HepG2 (cell line): ENCODE measurements at regions of chr11 and their contacts with region 1.

Region 1: GRCh38 chr11:100776212-100776896 is 89.3 kb downstream of the ARHGAP42 start:
- DNase-seq: peak; percentile 74
- ATAC-seq: peak; percentile 78
- H3K4me3 ChIP-seq: no peak overlapping the region; a peak in 1 of 6 replicates
- H3K27ac ChIP-seq: peak overlapping the region; percentile 52
- H3K4me1 ChIP-seq: peaks cover 40% of the 10 kb centered on the region
- H3K27me3 ChIP-seq: no peaks in the 10 kb centered on the region
- CTCF ChIP-seq: no peak
- EP300 ChIP-seq: peak in 1 of 2 experiments; percentile 50; a peak in 1 of 4 replicates
- POLR2A ChIP-seq: no peak
- RAD21 ChIP-seq: no peak

Region 2: DNA sequence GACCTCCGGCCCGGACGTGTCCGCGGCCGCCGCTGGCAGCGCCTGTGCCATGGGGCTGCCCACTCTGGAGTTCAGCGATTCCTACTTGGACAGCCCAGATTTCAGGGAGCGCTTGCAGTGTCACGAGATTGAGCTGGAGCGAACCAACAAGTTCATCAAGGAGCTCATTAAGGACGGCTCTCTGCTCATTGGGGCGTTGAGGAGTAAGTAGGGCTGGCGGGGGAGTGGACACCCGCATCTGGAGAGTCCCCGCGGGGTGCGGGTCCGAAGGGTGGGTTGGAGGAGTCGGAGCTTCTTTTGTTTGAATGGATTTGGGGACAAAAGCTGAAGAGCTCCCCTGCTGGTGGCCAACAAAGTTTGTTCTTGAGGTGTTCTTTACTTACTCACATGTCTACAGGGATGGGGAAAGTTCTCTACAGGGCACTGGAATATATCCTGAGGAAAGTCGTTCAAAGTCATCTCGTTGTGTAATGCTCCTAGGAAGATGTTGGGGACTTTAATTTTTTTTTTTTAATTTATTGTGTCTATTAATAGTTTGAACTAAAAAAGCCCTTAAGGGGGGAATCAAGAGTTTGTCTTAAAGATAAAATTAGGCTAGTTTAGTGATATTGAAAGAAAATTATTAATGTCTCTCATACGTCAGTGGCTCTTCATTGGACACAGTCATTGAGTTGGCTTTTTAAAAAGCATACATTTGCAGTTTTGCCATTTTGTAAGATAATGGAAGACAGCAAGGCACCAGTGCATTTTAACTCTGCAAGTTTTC is 88.5 kb before region 1 on chr11:
- CTCF ChIA-PET with region 1: no interaction called
- POLR2A ChIA-PET with region 1: interaction called, 3 read pairs
- in situ Hi-C with region 1: no loop called
- intact Hi-C with region 1: loop called (anchors 10 kb)
- DNase-seq: peak; percentile 55
- ATAC-seq: peak; percentile 81
- H3K4me3 ChIP-seq: peak overlapping the region; percentile 82 to 91 (median 84)
- H3K27ac ChIP-seq: no peak overlapping the region
- H3K4me1 ChIP-seq: peaks cover 34% of the 10 kb centered on the region
- H3K27me3 ChIP-seq: peaks cover 0 to 5% of the 10 kb centered on the region in 2 experiments; a peak in 2 of 5 replicates
- CTCF ChIP-seq: peak; percentile 62
- EP300 ChIP-seq: no peak
- POLR2A ChIP-seq: no peak
- RAD21 ChIP-seq: no peak

Region 3: DNA sequence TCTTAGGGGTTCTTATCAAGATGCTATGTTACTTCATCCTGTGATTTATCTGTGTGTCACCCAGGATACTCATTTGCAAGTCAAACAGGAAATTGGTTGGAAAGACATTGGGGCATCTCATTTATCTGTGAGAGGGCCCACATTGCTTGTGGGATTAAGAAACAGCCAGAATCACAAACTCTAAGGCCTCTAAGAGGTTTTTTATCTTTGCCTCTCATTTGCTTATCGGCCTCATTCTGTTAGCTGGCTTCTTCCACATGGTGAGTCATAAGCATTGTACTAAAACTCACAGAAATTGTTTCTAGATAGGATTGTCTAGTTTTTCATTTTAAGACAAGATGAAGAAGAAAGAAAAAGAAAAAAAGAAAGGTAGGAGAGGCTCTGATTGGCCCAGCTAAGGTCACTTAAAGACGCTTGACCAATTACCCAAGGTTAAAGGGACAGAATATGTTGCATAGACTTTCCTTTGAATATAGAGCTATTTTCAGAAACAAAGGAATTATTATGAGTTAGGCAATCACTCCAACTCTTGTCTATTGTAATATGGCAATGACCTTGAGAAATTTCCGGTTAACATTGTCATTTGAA is 32.6 kb after region 1 on chr11:
- CTCF ChIA-PET with region 1: no interaction called
- POLR2A ChIA-PET with region 1: no interaction called
- in situ Hi-C with region 1: no loop called
- intact Hi-C with region 1: loop called (anchors 1 kb)
- DNase-seq: no peak
- ATAC-seq: no peak
- H3K4me3 ChIP-seq: no peak overlapping the region
- H3K27ac ChIP-seq: no peak overlapping the region
- H3K4me1 ChIP-seq: 0 out of 2 replicates have a peak, but pooled peaks cover 14% of the 10 kb centered on the region
- H3K27me3 ChIP-seq: no peaks in the 10 kb centered on the region
- CTCF ChIP-seq: no peak
- EP300 ChIP-seq: no peak
- POLR2A ChIP-seq: no peak
- RAD21 ChIP-seq: no peak